Breast epithelium (tissue), 4 donors: ENCODE measurements at regions of chr1 and their contacts with region 1.

Region 1: GRCh38 chr1:225474986-225475820 is 47.4 kb upstream of the LBR start:
- DNase-seq: peak in 1 of 2 donors; percentile 25
- H3K4me3 ChIP-seq: peak overlapping the region in 2 of 3 donors; percentile 9 to 55
- H3K27ac ChIP-seq: no peak overlapping the region
- H3K4me1 ChIP-seq: no peaks in the 10 kb centered on the region
- H3K27me3 ChIP-seq: no peaks in the 10 kb centered on the region
- CTCF ChIP-seq: peak; percentile 100
- POLR2A ChIP-seq: no peak

Region 2: GRCh38 chr1:225777583-225778336 is 302.6 kb after region 1 on chr1 and contains the start of gene SRP9:
- intact Hi-C with region 1: loop called (anchors 10 kb)
- DNase-seq: peak; percentile 99
- H3K4me3 ChIP-seq: peak within 1 kb of the TSS; percentile 84 to 92 (median 88)
- H3K27ac ChIP-seq: peak within 1 kb of the TSS; percentile 97 to 99
- H3K4me1 ChIP-seq: peaks cover 4 to 18% of the 10 kb centered on the region in 2 donors
- H3K27me3 ChIP-seq: no peaks in the 10 kb centered on the region
- CTCF ChIP-seq: peak; percentile 85 to 93 (median 91)
- POLR2A ChIP-seq: peak; percentile 94
- total RNA-seq, gene SRP9: 168 to 251 (median 205) TPM

Region 3: GRCh38 chr1:225845571-225846259 is 370.5 kb after region 1 on chr1:
- intact Hi-C with region 1: loop called (anchors 5 kb)
- DNase-seq: peak; percentile 73 to 79
- H3K4me3 ChIP-seq: no peak overlapping the region
- H3K27ac ChIP-seq: peak overlapping the region; percentile 36 to 48
- H3K4me1 ChIP-seq: no peaks in the 10 kb centered on the region
- H3K27me3 ChIP-seq: no peaks in the 10 kb centered on the region
- CTCF ChIP-seq: peak in 2 of 3 donors; percentile 79 to 84
- POLR2A ChIP-seq: no peak

Region 4: DNA sequence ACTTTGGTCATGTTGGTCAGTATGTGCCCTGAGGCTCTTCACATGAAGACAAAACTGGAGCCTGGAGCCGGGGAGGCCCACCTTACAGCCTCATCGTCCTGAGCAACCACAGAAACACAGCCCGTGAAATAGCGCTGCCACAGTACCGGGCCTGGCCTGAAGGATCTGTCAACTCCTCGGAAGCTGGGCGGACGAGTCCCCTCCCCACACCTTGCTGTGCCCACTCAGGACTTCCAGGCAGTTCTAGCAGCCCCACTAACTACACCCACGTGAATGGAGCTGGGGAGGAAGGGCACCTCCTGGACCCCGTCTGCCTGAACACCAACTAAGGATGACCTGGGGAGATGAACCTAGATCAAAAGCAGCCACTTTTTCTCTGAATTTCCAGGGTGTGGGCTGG is 499.3 kb after region 1 on chr1:
- intact Hi-C with region 1: loop called (anchors 2 kb)
- DNase-seq: no peak
- H3K4me3 ChIP-seq: no peak overlapping the region
- H3K27ac ChIP-seq: no peak overlapping the region
- H3K4me1 ChIP-seq: no peaks in the 10 kb centered on the region
- H3K27me3 ChIP-seq: no peaks in the 10 kb centered on the region
- CTCF ChIP-seq: no peak
- POLR2A ChIP-seq: no peak